Caco-2 (cell line): ENCODE measurements at regions of chr4 and their contacts with region 1.

Region 1: DNA sequence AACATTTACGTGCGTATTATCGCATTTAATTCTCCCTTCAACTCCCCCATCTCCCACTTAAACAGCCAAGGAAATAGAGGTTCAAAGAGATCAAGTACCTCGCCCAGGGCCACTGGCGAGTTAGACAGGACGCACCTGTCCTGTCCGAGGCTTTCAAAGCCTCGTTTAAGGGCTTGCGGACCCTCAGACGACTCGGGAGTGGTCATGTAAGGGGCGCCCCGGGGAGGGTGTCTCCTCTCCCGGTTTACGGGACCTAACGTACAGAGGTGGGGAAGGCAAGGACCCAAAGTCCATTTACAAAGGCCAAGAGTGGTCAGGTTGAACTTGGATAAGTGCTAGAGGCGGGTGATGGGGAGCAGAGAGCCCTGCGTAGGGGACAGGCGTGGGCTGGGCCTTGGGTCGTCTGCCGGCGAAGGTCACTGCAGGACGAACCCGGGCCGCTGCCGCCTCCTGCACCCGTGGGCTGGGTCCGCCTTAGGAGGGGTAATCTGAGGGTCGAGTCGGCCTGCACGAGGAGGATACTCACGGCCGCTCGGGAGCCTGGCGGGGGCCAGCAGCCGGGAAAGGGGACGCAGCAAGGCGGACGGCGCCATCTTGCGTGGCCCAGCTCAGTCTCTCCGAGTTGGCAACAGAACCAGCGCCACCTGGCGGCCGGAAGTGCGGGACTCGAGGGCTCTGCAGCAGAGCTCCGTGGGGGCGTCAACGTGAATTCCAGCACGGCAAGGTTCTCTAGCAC is 5.9 kb upstream of the NAA15 start:
- DNase-seq: peak; percentile 93 to 96
- H3K4me3 ChIP-seq: peak overlapping the region; percentile 88
- H3K4me3 Mint-ChIP-seq: peak overlapping the region; percentile 86
- H3K27ac Mint-ChIP-seq: peak overlapping the region; percentile 92
- H3K4me1 ChIP-seq: peaks cover 9% of the 10 kb centered on the region; the same call in 1 of the 2 replicates
- H3K4me1 Mint-ChIP-seq: no peaks in the 10 kb centered on the region
- H3K27me3 ChIP-seq: no peaks in the 10 kb centered on the region
- H3K27me3 Mint-ChIP-seq: no peaks in the 10 kb centered on the region
- CTCF ChIP-seq: peak; percentile 87 to 95

Region 2: DNA sequence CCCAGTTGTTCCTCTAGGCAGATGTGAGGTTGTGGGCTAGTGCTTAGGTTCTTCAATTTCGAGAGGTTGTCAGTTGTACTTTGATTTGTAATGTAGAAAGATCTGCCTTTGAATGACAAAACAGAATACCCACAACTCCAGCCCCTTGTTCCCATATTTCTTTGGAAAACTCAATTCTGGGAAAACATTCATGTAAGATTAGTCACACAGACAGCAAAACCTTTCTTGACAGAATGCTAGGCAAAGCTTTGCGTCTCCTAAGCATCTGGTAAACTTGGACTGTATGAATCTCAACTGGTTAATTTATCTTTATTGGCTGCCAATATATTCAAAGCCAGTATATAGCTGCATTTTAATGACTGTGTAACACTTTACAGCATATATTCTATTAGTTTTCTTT is 244.9 kb before region 1 on chr4:
- CTCF ChIA-PET with region 1: no interaction called
- POLR2A ChIA-PET with region 1: interaction called, 12 read pairs
- intact Hi-C with region 1: no loop called
- DNase-seq: no peak
- H3K4me3 ChIP-seq: no peak overlapping the region
- H3K4me3 Mint-ChIP-seq: no peak overlapping the region
- H3K27ac Mint-ChIP-seq: no peak overlapping the region
- H3K4me1 ChIP-seq: peaks cover 13% of the 10 kb centered on the region
- H3K4me1 Mint-ChIP-seq: peaks cover 19% of the 10 kb centered on the region
- H3K27me3 ChIP-seq: no peaks in the 10 kb centered on the region
- H3K27me3 Mint-ChIP-seq: no peaks in the 10 kb centered on the region
- CTCF ChIP-seq: no peak

Region 3: DNA sequence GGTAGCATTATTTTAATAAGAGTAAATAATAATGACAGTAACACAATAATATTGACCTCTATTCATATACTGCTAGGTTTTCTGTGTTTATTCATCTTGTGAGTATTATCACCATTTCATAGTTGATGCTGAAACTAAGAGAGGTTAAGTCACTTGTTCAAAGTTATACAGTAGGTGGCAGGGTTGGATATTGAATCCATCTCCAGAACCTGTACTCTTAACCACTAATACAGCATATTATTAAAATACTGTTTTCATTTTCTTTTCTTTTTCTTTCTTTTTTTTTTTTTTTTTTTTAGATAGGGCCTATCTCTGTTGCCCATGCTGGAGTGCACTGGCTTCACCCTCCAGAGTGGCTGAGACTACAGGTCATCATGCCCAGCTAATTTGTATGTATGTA is 111.2 kb before region 1 on chr4:
- CTCF ChIA-PET with region 1: interaction called, 4 read pairs
- POLR2A ChIA-PET with region 1: interaction called, 44 read pairs
- intact Hi-C with region 1: loop called (anchors 1 kb)
- DNase-seq: no peak
- H3K4me3 ChIP-seq: no peak overlapping the region
- H3K4me3 Mint-ChIP-seq: no peak overlapping the region
- H3K27ac Mint-ChIP-seq: no peak overlapping the region
- H3K4me1 ChIP-seq: peaks cover 8% of the 10 kb centered on the region; the same call in 1 of the 2 replicates
- H3K4me1 Mint-ChIP-seq: peaks cover 10% of the 10 kb centered on the region
- H3K27me3 ChIP-seq: no peaks in the 10 kb centered on the region
- H3K27me3 Mint-ChIP-seq: no peaks in the 10 kb centered on the region
- CTCF ChIP-seq: no peak

Region 4: GRCh38 chr4:139266583-139267257 is 28.7 kb before region 1 on chr4:
- CTCF ChIA-PET with region 1: no interaction called
- POLR2A ChIA-PET with region 1: interaction called, 3 read pairs
- intact Hi-C with region 1: loop called (anchors 1 kb)
- DNase-seq: peak; percentile 73 to 82
- H3K4me3 ChIP-seq: peak overlapping the region; percentile 31
- H3K4me3 Mint-ChIP-seq: peak overlapping the region; percentile 83
- H3K27ac Mint-ChIP-seq: peak overlapping the region; percentile 85
- H3K4me1 ChIP-seq: peaks cover 18% of the 10 kb centered on the region
- H3K4me1 Mint-ChIP-seq: peaks cover 17% of the 10 kb centered on the region
- H3K27me3 ChIP-seq: no peaks in the 10 kb centered on the region
- H3K27me3 Mint-ChIP-seq: no peaks in the 10 kb centered on the region
- CTCF ChIP-seq: no peak

Region 5: DNA sequence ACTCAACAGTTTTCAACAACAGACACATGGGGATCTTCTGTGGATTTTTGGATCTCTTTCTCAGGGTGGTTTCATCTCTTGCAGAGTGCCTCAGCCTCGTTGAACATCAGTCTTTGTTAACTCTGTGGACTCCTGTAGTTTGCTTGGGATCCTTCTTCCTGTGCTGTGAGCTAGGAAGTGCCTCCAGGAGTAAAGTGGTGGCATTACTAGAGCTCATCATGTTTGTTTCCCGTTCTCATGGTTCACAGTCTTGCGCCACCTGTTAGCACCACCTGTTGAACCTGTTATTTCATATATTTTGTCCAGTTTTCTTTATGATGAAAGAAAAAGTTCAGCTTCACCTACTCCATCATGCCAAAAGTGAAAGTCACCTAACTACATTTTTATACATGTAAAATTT is 34.4 kb after region 1 on chr4:
- CTCF ChIA-PET with region 1: no interaction called
- POLR2A ChIA-PET with region 1: no interaction called
- intact Hi-C with region 1: no loop called
- DNase-seq: no peak
- H3K4me3 ChIP-seq: no peak overlapping the region
- H3K4me3 Mint-ChIP-seq: no peak overlapping the region
- H3K27ac Mint-ChIP-seq: no peak overlapping the region
- H3K4me1 ChIP-seq: no peaks in the 10 kb centered on the region
- H3K4me1 Mint-ChIP-seq: peaks cover 15% of the 10 kb centered on the region
- H3K27me3 ChIP-seq: no peaks in the 10 kb centered on the region
- H3K27me3 Mint-ChIP-seq: no peaks in the 10 kb centered on the region
- CTCF ChIP-seq: no peak

Region 6: GRCh38 chr4:139392797-139393196 is 97.4 kb after region 1 on chr4:
- CTCF ChIA-PET with region 1: no interaction called
- POLR2A ChIA-PET with region 1: no interaction called
- intact Hi-C with region 1: no loop called
- DNase-seq: no peak
- H3K4me3 ChIP-seq: no peak overlapping the region
- H3K4me3 Mint-ChIP-seq: no peak overlapping the region
- H3K27ac Mint-ChIP-seq: no peak overlapping the region
- H3K4me1 ChIP-seq: no peaks in the 10 kb centered on the region
- H3K4me1 Mint-ChIP-seq: no peaks in the 10 kb centered on the region
- H3K27me3 ChIP-seq: no peaks in the 10 kb centered on the region
- H3K27me3 Mint-ChIP-seq: no peaks in the 10 kb centered on the region
- CTCF ChIP-seq: no peak

Region 7: DNA sequence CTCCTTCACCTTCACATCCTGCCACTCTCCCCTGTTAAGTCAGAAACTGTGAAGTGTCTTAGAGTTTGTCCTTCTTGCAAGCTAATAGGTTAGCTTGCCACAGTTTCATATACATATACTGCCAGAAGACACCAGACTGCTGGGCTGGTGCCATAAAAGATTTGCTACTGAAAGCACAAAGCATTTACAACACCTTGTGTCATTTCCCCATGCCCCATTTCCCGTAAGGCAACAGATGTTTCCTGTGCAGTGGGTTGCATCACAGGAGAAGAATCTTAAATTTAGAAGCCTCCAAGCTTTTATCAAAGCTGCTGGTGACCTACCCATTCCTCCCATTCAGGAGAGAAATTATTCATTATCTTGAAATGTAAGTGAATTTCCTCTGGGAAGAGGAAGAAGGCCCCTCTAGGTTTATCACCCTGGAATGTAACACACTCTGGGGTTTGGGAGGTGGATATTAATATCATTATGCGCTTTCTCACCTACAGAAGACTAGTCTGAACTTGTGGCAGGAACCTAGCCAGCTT is 124.1 kb after region 1 on chr4:
- CTCF ChIA-PET with region 1: no interaction called
- POLR2A ChIA-PET with region 1: no interaction called
- intact Hi-C with region 1: no loop called
- DNase-seq: no peak
- H3K4me3 ChIP-seq: no peak overlapping the region
- H3K4me3 Mint-ChIP-seq: no peak overlapping the region
- H3K27ac Mint-ChIP-seq: no peak overlapping the region
- H3K4me1 ChIP-seq: no peaks in the 10 kb centered on the region
- H3K4me1 Mint-ChIP-seq: peaks cover 8% of the 10 kb centered on the region
- H3K27me3 ChIP-seq: no peaks in the 10 kb centered on the region
- H3K27me3 Mint-ChIP-seq: no peaks in the 10 kb centered on the region
- CTCF ChIP-seq: no peak